Lower leg skin (tissue), 4 donors: ENCODE measurements at regions of chr9 and their contacts with region 1.

Region 1: DNA sequence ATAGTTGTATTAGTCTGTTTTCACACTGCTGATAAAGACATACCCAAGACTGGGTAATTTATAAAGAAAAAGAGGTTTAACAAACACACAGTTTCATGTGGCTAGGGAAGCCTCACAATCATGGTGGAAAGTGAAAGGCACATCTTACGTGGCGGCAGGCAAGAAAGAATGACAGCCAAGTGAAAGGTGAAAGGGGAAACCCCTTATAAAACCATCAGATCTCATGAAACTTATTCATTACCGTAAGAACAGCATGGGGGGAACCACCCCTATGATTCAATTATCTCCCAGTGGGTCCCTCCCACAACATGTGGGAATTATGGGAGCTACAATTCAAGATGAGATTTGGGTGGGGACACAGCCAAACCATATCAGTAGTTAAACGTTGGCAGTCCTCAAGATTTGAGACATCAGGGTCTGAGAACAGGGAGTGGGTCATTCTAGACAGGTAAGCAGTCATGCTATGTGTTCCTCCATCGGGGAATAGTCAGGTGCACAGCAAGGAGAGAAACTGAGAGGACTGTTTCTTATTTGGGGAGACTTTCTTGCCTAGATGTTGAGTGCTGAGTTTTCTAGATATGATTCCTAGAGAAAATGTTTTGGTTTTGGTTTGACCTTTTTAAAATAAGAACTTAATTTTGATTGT is 45.8 kb upstream of the ENTREP1 start:
- DNase-seq: no peak
- H3K4me3 ChIP-seq: no peak overlapping the region
- CTCF ChIP-seq: no peak
- POLR2A ChIP-seq: no peak

Region 2: GRCh38 chr9:69056191-69056815 is 222.9 kb before region 1 on chr9:
- intact Hi-C with region 1: no loop called
- DNase-seq: peak in 1 of 2 donors; percentile 28
- H3K4me3 ChIP-seq: no peak overlapping the region
- CTCF ChIP-seq: no peak
- POLR2A ChIP-seq: no peak

Region 3: DNA sequence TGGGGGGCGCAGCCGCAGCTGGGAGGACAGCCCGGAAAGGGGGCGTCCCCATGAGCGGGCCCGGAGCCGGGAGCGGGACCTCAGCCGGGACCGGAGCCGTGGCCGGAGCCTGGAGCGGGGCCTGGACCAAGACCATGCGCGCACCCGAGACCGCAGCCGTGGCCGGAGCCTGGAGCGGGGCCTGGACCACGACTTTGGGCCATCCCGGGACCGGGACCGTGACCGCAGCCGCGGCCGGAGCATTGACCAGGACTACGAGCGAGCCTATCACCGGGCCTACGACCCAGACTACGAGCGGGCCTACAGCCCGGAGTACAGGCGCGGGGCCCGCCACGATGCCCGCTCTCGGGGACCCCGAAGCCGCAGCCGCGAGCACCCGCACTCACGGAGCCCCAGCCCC is 58.2 kb before region 1 on chr9:
- intact Hi-C with region 1: loop called (anchors 2 kb)
- DNase-seq: no peak
- H3K4me3 ChIP-seq: no peak overlapping the region
- CTCF ChIP-seq: no peak
- POLR2A ChIP-seq: no peak

Region 4: DNA sequence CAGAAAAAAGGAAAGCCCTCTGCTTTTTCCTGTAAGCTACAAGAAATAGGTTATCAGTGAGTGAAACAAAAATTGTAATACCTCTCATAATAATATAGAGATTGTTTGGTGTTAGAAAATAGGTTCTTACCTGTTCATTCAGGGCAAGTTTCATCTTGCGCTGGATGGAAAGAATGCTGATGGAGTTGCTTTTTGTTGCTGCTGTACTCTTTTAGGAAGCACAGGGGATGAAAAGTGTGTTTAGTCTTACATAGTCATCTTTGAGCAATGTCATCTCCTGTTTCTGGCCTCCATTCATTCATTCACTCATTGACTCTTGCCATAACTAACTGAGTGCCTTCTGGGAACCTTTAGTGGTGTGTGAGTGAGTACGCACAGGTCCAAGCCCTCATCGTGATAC is 52.2 kb after region 1 on chr9:
- intact Hi-C with region 1: no loop called
- DNase-seq: no peak
- H3K4me3 ChIP-seq: no peak overlapping the region
- CTCF ChIP-seq: no peak
- POLR2A ChIP-seq: no peak